ENCODE measurements at regions of chr11 and their contacts with region 1.

Region 1: GRCh38 chr11:43567396-43567975 is 113.1 kb upstream of the HSD17B12 start:
- DNase-seq: peak; percentile 55 to 61 (median 58)
- ATAC-seq: peak; percentile 82
- H3K4me3 ChIP-seq: no peak overlapping the region
- H3K27ac ChIP-seq: no peak overlapping the region
- H3K4me1 ChIP-seq: no peaks in the 10 kb centered on the region
- H3K27me3 ChIP-seq: no peaks in the 10 kb centered on the region
- CTCF ChIP-seq: peak; percentile 59 to 77 (median 65); a peak in 5 of 6 replicates
- EP300 ChIP-seq: no peak
- POLR2A ChIP-seq: no peak
- RAD21 ChIP-seq: peak; percentile 52 to 70

Region 2: DNA sequence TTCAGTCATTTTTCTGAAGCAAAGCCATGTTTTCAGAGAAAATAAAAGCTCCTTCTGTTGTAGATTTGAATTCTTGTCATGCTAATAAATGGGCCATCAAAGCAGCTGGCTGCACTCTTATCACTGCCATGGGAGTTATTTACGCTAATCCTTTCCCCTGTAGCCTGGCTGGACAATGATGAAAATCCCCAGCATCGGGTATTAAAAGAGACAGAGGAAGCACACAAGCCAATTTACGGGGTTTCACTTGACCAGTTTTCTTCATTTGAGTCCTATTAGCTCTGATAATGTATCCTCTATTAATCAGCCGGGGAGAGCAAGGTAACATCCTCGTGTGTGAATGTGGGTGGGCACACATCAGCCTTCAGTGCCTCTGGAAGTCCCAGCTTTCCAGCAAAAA is 725.9 kb before region 1 on chr11:
- CTCF ChIA-PET with region 1: no interaction called
- POLR2A ChIA-PET with region 1: no interaction called
- in situ Hi-C with region 1: no loop called
- intact Hi-C with region 1: no loop called
- DNase-seq: no peak
- ATAC-seq: no peak
- H3K4me3 ChIP-seq: no peak overlapping the region
- H3K27ac ChIP-seq: no peak overlapping the region
- H3K4me1 ChIP-seq: no peaks in the 10 kb centered on the region
- H3K27me3 ChIP-seq: no peaks in the 10 kb centered on the region
- CTCF ChIP-seq: no peak
- EP300 ChIP-seq: no peak
- POLR2A ChIP-seq: no peak
- RAD21 ChIP-seq: no peak

Region 3: GRCh38 chr11:43504316-43504950 is 63.1 kb before region 1 on chr11:
- CTCF ChIA-PET with region 1: interaction called, 10 read pairs
- POLR2A ChIA-PET with region 1: no interaction called
- in situ Hi-C with region 1: no loop called
- intact Hi-C with region 1: loop called (anchors 1 kb)
- DNase-seq: peak in 2 of 4 experiments; percentile 26 to 37
- ATAC-seq: peak; percentile 76
- H3K4me3 ChIP-seq: no peak overlapping the region
- H3K27ac ChIP-seq: no peak overlapping the region
- H3K4me1 ChIP-seq: no peaks in the 10 kb centered on the region
- H3K27me3 ChIP-seq: peaks cover 4 to 27% of the 10 kb centered on the region in 2 experiments; a peak in 4 of 5 replicates
- CTCF ChIP-seq: peak; percentile 45 to 55 (median 53)
- EP300 ChIP-seq: no peak
- POLR2A ChIP-seq: no peak
- RAD21 ChIP-seq: peak; percentile 60 to 70

Region 4: DNA sequence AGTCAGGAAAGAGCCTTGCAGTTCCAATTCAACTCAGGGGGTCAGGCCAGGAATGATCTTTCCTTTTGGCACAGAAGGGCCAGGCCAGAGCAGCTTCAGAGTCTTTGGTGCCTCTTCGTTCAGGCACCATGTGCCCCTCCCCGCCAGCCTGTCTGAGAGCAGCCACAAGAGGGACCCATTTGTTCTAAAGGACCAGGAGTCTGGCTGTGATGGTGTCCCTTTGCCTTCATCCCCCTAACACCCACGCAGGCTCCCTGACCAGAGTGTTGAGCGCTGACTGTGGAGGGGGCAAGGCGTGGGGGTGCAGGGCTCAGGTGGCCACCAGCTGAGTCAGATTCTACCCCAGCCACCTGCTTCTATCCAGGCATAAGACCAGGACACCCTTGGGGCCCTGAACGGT is 52.4 kb before region 1 on chr11:
- CTCF ChIA-PET with region 1: no interaction called
- POLR2A ChIA-PET with region 1: no interaction called
- in situ Hi-C with region 1: no loop called
- intact Hi-C with region 1: loop called (anchors 2 kb)
- DNase-seq: peak; percentile 47 to 56 (median 52)
- ATAC-seq: peak; percentile 93
- H3K4me3 ChIP-seq: no peak overlapping the region
- H3K27ac ChIP-seq: no peak overlapping the region
- H3K4me1 ChIP-seq: no peaks in the 10 kb centered on the region
- H3K27me3 ChIP-seq: peaks cover 4 to 37% of the 10 kb centered on the region in 2 experiments; a peak in 2 of 5 replicates
- CTCF ChIP-seq: peak; percentile 43 to 66 (median 61)
- EP300 ChIP-seq: no peak
- POLR2A ChIP-seq: no peak
- RAD21 ChIP-seq: peak; percentile 28 to 62; a peak in 3 of 4 replicates

Region 5: GRCh38 chr11:43542750-43543712 is 24.5 kb before region 1 on chr11:
- CTCF ChIA-PET with region 1: no interaction called
- POLR2A ChIA-PET with region 1: no interaction called
- in situ Hi-C with region 1: no loop called
- intact Hi-C with region 1: no loop called
- DNase-seq: no peak
- ATAC-seq: no peak
- H3K4me3 ChIP-seq: no peak overlapping the region
- H3K27ac ChIP-seq: no peak overlapping the region
- H3K4me1 ChIP-seq: peaks cover under 1 to 12% of the 10 kb centered on the region in 2 experiments; a peak in 3 of 5 replicates
- H3K27me3 ChIP-seq: peaks cover 2 to 22% of the 10 kb centered on the region in 2 experiments; a peak in 3 of 5 replicates
- CTCF ChIP-seq: no peak
- EP300 ChIP-seq: no peak
- POLR2A ChIP-seq: no peak
- RAD21 ChIP-seq: no peak

Measured in K562 (cell line).